Esophagus squamous epithelium (tissue), 5 donors: ENCODE measurements at regions of chr12 and their contacts with region 1.

Region 1: DNA sequence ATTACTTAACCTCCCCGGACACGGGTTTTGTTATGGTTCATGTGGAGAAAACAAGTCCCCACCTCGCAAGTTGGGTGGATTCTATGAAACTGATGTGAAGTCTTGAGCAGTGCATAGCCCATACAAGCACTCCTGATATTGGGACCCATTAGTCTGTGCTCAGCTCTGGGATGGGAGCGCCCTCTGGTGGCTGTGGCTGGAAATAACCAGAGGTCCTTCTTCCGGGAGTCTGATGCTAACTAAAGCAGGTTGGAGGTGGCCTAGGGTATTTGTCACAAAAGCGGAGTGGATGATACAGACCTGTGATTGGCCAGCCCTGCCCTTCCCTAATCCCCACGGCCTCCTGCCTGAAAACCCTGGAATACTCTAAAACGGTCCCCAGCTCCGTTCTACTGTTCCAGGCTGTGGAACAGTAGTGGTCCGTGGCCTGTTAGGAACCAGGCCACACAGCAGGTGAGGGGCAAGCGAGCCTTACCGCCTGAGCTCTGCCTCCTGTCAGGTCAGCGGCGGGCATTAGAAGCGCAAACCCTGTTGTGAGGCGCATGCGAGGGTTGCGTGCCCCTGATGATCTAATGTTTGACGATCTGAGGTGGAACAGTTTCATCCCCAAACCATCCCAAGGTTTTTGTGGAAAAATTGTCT is 6.4 kb downstream of the SLC48A1 start:
- DNase-seq: peak; percentile 32
- H3K4me3 ChIP-seq: no peak overlapping the region
- H3K27ac ChIP-seq: peak overlapping the region in 3 of 4 donors; percentile 5 to 64 (median 58)
- H3K4me1 ChIP-seq: peaks cover 68 to 100% (median 74%) of the 10 kb centered on the region in 3 donors
- H3K27me3 ChIP-seq: no peaks in the 10 kb centered on the region
- CTCF ChIP-seq: peak; percentile 92 to 97 (median 96)
- POLR2A ChIP-seq: no peak

Region 2: DNA sequence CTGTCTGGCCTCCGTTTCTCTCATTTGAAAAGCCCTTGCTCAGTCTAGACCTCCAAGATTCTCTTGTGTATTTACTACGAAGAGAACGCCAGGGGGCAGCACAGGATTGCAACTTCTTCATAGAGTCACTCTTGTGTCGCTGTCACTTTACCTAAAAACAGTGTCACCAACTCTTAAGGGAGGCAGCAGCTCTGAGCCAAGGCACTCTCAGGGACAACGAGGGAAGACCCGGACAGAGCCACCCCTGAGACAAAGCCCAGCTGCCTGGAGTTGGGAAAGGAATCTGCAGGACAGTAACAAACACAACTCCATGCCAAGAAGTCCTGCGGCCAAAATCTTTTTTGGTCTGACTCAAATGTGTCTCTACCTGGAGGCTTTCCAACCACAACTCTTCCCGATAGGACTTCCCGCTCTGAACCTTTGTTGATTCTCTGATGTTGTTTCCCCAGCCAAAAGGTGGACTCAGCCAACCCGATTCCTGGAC is 64.0 kb before region 1 on chr12:
- intact Hi-C with region 1: loop called (anchors 5 kb)
- DNase-seq: no peak
- H3K4me3 ChIP-seq: peak overlapping the region in 1 of 4 donors; percentile 34
- H3K27ac ChIP-seq: peak overlapping the region in 3 of 4 donors; percentile 86 to 89 (median 89)
- H3K4me1 ChIP-seq: peaks cover 26 to 51% (median 41%) of the 10 kb centered on the region in 3 donors
- H3K27me3 ChIP-seq: no peaks in the 10 kb centered on the region
- CTCF ChIP-seq: peak; percentile 68 to 84 (median 82)
- POLR2A ChIP-seq: no peak

Region 3: GRCh38 chr12:47742253-47742825 is 37.1 kb before region 1 on chr12:
- intact Hi-C with region 1: loop called (anchors 5 kb)
- DNase-seq: no peak
- H3K4me3 ChIP-seq: no peak overlapping the region
- H3K27ac ChIP-seq: peak overlapping the region in 1 of 4 donors; percentile 3
- H3K4me1 ChIP-seq: peaks cover 30 to 68% (median 33%) of the 10 kb centered on the region in 3 donors
- H3K27me3 ChIP-seq: no peaks in the 10 kb centered on the region
- CTCF ChIP-seq: peak; percentile 95 to 99 (median 98)
- POLR2A ChIP-seq: no peak

Region 4: GRCh38 chr12:47837190-47838171 is 58.1 kb after region 1 on chr12:
- intact Hi-C with region 1: loop called (anchors 5 kb)
- DNase-seq: no peak
- H3K4me3 ChIP-seq: no peak overlapping the region
- H3K27ac ChIP-seq: no peak overlapping the region
- H3K4me1 ChIP-seq: peaks cover 0 to 38% (median 4%) of the 10 kb centered on the region in 3 donors
- H3K27me3 ChIP-seq: no peaks in the 10 kb centered on the region
- CTCF ChIP-seq: peak; percentile 91 to 98 (median 95)
- POLR2A ChIP-seq: no peak